ENCODE measurements at regions of chr7 and their contacts with region 1.

Region 1: DNA sequence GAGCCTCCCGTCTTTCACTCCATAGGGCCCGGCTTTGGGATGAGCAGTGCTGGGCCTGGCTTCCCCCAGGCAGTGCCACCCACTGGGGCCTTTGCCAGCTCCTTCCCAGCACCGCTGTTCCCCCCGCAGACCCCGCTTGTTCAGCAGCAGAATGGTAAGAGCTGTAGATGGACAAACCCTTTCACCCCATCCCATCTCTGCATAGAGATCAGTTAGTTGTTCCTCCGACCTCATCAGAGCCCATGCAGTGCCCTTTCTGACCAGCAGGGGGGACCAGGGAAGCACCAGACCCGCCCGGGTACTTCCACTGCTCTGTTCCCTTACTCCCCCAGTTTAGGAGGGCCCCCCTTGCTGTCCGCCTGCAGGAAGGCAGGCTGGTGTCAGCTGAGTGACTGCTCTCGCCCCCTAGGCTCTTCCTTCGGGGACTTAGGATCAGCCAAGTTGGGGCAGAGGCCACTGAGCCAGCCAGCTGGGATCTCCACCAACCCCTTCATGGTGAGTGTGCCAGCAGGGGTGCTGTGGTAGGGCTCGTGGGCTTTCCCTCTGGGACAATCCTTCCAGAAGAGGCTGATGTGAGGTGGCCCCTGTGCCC is 9.8 kb downstream of the SAP25 start:
- DNase-seq: peak; percentile 68 to 88 (median 77)
- H3K4me3 ChIP-seq: no peak overlapping the region
- H3K4me3 Mint-ChIP-seq: no peak overlapping the region
- H3K27ac ChIP-seq: no peak overlapping the region
- H3K27ac Mint-ChIP-seq: peak overlapping the region in 4 of 8 donors; percentile 40 to 88 (median 66)
- H3K4me1 ChIP-seq: peaks cover 33% of the 10 kb centered on the region
- H3K4me1 Mint-ChIP-seq: peaks cover 18 to 35% (median 25%) of the 10 kb centered on the region in 3 donors
- H3K27me3 ChIP-seq: no peaks in the 10 kb centered on the region
- H3K27me3 Mint-ChIP-seq: peaks cover 0 to 1% of the 10 kb centered on the region in 2 donors

Region 2: DNA sequence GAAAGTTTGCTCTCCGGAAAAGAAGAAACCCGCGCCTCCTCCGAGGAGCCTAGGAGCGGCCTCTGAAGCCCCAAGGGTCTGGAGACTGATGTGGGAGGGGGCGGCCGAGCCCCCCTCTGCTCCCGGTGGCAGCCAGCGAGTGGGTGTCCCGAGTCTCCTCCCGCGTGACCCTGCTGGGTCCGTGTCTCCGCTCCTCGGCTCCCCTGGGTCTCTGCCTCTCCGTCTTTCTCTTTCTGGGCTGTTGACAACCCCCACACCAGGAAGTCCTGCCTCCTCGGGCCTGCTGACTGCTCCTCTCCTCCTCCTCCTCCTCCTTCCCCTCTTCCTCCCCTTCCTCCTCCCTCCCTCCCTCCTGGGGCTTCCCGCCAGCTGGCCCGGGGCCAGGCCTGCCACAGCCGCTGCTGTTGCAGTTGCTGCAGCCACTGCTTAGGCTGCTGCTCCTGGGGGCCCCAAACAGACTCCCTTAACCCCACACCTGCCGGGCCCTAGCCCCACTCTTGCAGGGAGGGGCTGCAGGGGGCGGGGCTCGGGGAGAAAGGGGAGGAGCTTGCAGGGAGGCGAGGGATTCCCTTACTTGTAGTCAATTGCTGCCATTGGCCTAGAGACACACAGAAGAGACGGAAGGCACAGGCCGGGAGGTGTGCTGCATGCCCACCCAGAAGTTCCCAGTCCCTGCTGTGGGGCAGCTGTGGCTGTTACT is 84.8 kb before region 1 on chr7 and contains the start of gene TSC22D4:
- CTCF ChIA-PET with region 1: interaction called, 174 read pairs
- POLR2A ChIA-PET with region 1: interaction called, 4 read pairs
- DNase-seq: peak; percentile 88 to 97 (median 93)
- H3K4me3 ChIP-seq: peak within 1 kb of the TSS; percentile 66
- H3K4me3 Mint-ChIP-seq: peak within 1 kb of the TSS; percentile 93 to 100 (median 99)
- H3K27ac ChIP-seq: peak within 1 kb of the TSS; percentile 90
- H3K27ac Mint-ChIP-seq: peak within 1 kb of the TSS; percentile 87 to 100 (median 94)
- H3K4me1 ChIP-seq: peaks cover 50% of the 10 kb centered on the region
- H3K4me1 Mint-ChIP-seq: peaks cover 31 to 50% (median 47%) of the 10 kb centered on the region in 3 donors
- H3K27me3 ChIP-seq: no peaks in the 10 kb centered on the region
- H3K27me3 Mint-ChIP-seq: peaks cover 0 to 6% of the 10 kb centered on the region in 2 donors
- total RNA-seq, gene TSC22D4: 96.2 to 99.1 TPM

Region 3: GRCh38 chr7:100532165-100533022 is 31.5 kb before region 1 on chr7:
- CTCF ChIA-PET with region 1: interaction called, 17 read pairs
- POLR2A ChIA-PET with region 1: interaction called, 8 read pairs
- DNase-seq: no peak
- H3K4me3 ChIP-seq: no peak overlapping the region
- H3K4me3 Mint-ChIP-seq: no peak overlapping the region
- H3K27ac ChIP-seq: no peak overlapping the region
- H3K27ac Mint-ChIP-seq: no peak overlapping the region
- H3K4me1 ChIP-seq: no peaks in the 10 kb centered on the region
- H3K4me1 Mint-ChIP-seq: no peaks in the 10 kb centered on the region
- H3K27me3 ChIP-seq: no peaks in the 10 kb centered on the region
- H3K27me3 Mint-ChIP-seq: no peaks in the 10 kb centered on the region

Region 4: DNA sequence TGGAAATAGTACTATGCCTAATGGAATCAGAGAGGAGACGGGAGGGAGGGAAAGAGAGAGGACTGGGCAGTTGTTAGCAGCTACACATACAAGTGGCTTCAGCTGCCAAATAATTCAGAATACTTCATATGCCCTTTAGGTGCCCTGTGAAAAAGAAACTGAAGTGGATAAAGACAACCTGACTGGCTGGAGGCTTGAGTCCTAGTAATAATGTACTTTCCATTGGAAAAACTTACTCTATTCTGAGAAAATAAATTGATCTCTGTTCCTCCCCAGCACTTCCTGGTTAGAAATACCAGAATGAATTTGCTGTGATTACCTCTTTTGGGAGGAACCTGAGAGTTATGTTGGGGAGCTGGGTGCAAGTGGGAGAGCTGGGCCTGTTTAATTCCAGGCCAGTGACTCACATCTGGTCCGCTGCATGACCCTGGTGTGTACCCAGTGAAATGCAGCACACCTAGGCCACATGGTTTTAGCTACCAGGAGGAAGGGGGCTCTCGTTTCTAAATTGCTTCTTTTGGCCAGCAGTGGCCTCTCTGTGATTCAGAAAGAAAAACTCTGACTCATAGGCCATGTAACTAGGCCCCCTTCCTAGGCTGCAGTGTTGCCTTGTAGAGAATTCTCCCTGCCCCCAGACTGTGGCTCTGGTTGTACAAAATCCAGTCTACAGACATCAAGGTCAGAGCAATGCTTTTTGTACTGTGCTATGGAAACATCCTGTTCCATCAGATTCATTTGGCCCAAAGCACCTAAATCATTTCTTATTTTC is 18.4 kb before region 1 on chr7:
- CTCF ChIA-PET with region 1: interaction called, 104 read pairs
- POLR2A ChIA-PET with region 1: interaction called, 6 read pairs
- DNase-seq: peak in 3 of 5 donors; percentile 18 to 67 (median 24)
- H3K4me3 ChIP-seq: peak overlapping the region; percentile 46
- H3K4me3 Mint-ChIP-seq: peak overlapping the region; percentile 60 to 98 (median 96)
- H3K27ac ChIP-seq: peak overlapping the region; percentile 70
- H3K27ac Mint-ChIP-seq: peak overlapping the region; percentile 86 to 99 (median 98)
- H3K4me1 ChIP-seq: peaks cover 97% of the 10 kb centered on the region
- H3K4me1 Mint-ChIP-seq: peaks cover 94 to 100% (median 99%) of the 10 kb centered on the region in 3 donors
- H3K27me3 ChIP-seq: no peaks in the 10 kb centered on the region
- H3K27me3 Mint-ChIP-seq: no peaks in the 10 kb centered on the region

Region 5: DNA sequence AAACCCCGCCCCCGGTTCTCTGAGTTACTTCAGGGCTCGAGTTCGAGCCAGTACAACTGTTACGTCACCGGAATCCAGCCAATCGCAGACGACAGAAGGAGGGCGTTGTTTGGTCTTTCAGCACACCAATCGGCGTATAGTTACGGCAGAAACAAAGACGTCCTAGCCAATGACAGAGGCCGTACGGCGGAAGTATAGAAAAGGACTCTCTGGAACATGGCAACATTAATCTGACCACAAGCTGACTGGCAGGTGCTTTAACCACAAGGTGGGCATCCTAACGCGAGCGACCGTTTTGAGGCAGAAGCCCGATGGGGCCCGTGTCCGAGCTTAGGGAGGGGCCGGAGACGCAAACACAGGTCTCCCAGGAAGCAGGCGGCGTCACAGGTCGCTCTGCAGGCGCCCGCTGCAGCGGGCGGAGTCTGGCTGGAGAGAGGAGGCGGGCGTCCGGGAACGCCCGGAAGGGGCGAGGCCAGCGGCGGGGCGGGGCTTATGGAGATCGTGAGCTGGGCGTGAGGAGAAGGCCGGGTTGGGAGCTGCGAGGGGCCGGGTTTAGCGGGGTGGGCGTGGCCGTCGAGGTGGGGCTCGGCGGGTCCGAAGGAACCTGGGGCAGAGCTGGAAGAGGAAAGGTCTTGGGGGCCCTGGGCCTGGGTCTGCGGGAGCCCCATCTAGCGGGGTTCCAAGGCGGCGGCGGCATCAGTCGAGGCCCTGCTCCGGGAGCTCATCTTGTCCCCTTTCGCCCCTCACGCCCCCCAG is 48.2 kb after region 1 on chr7 and contains the start of gene MOSPD3:
- CTCF ChIA-PET with region 1: interaction called, 7 read pairs
- POLR2A ChIA-PET with region 1: interaction called, 10 read pairs
- DNase-seq: peak; percentile 96 to 98 (median 98)
- H3K4me3 ChIP-seq: peak within 1 kb of the TSS; percentile 99
- H3K4me3 Mint-ChIP-seq: peak within 1 kb of the TSS; percentile 91 to 100 (median 99)
- H3K27ac ChIP-seq: peak within 1 kb of the TSS; percentile 99
- H3K27ac Mint-ChIP-seq: peak within 1 kb of the TSS; percentile 94 to 100 (median 100)
- H3K4me1 ChIP-seq: peaks cover 19% of the 10 kb centered on the region
- H3K4me1 Mint-ChIP-seq: peaks cover 20 to 24% (median 23%) of the 10 kb centered on the region in 3 donors
- H3K27me3 ChIP-seq: no peaks in the 10 kb centered on the region
- H3K27me3 Mint-ChIP-seq: no peaks in the 10 kb centered on the region
- total RNA-seq, gene MOSPD3: 16.2 to 16.3 TPM

Region 6: DNA sequence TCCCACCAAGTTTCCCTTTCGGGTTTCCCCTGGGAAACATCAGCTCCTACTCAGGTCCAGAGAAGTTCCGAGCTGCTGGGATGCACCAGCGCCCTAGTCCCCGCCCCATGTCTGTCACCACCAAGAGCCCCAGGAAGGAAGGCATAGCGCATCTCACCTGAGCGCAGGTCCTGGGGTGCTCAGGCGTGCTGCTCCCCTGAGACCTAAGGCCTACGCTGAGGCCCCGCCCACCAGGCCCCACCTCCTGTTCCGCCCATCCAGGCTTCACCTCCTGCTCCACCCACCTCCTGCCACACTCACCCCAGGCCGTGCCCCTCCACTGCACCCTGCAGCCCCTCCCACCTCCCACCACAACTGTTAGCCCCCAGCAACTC is 78.6 kb after region 1 on chr7:
- CTCF ChIA-PET with region 1: no interaction called
- POLR2A ChIA-PET with region 1: no interaction called
- DNase-seq: no peak
- H3K4me3 ChIP-seq: no peak overlapping the region
- H3K4me3 Mint-ChIP-seq: no peak overlapping the region
- H3K27ac ChIP-seq: no peak overlapping the region
- H3K27ac Mint-ChIP-seq: no peak overlapping the region
- H3K4me1 ChIP-seq: no peaks in the 10 kb centered on the region
- H3K4me1 Mint-ChIP-seq: no peaks in the 10 kb centered on the region
- H3K27me3 ChIP-seq: no peaks in the 10 kb centered on the region
- H3K27me3 Mint-ChIP-seq: peaks cover 6 to 10% of the 10 kb centered on the region in 2 donors

Measured in CD8-positive, alpha-beta memory T cell (primary cell).